ENCODE measurements at regions of chr2 and their contacts with region 1.

Region 1: GRCh38 chr2:26605195-26605998 is 35.8 kb downstream of the CIB4 start:
- DNase-seq: peak; percentile 60
- ATAC-seq: peak; percentile 76
- H3K4me3 Mint-ChIP-seq: no peak overlapping the region
- H3K27ac Mint-ChIP-seq: no peak overlapping the region
- H3K4me1 Mint-ChIP-seq: peaks cover 20% of the 10 kb centered on the region
- H3K27me3 Mint-ChIP-seq: peaks cover 20% of the 10 kb centered on the region

Region 2: GRCh38 chr2:26591619-26592505 is 13.5 kb before region 1 on chr2:
- CTCF ChIA-PET with region 1: interaction called, 34 read pairs
- POLR2A ChIA-PET with region 1: no interaction called
- DNase-seq: no peak
- ATAC-seq: no peak
- H3K4me3 Mint-ChIP-seq: no peak overlapping the region
- H3K27ac Mint-ChIP-seq: no peak overlapping the region
- H3K4me1 Mint-ChIP-seq: peaks cover 6% of the 10 kb centered on the region
- H3K27me3 Mint-ChIP-seq: peaks cover 26% of the 10 kb centered on the region

Region 3: DNA sequence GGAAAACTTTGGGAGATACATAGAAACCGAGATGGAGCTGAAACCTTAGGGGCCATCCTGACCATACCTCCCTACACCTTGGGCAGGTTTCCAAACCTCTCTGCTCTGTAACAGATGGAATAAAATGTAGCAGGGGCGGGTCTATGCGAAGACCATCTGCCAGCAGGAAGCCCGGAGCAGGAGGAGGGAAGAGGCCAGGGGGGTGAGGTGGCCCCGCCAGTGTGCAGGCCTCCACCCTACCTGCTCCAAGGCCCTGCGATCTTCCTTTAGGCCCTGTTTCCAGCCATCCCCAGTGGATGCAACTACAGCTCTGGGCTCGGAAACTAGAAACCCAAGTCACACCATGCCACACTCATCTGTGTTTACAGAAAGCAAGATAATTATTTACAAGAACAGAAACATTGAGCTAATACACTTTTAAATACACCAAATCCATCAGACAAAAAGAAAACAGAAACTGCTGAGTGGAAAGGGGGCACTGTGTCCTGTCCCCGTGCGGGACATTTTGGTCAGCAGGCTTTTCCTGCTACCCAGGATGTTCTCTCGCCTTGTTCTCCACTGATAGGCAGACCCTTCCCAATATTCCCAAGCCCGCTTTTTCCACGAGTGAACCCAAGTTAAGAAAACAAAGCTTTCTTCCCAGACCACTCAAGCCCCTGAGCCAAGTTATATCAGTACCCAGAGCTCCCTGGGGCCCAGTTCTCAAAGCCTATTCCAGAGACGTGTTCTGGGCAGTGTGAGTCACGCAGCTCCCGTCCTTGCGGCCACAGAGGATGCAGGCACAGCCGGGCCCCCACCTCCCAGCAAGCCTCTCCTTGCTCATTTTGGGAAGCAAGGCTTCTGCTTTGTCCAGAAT is 18.4 kb after region 1 on chr2:
- CTCF ChIA-PET with region 1: no interaction called
- POLR2A ChIA-PET with region 1: no interaction called
- DNase-seq: no peak
- ATAC-seq: no peak
- H3K4me3 Mint-ChIP-seq: no peak overlapping the region
- H3K27ac Mint-ChIP-seq: no peak overlapping the region
- H3K4me1 Mint-ChIP-seq: no peaks in the 10 kb centered on the region
- H3K27me3 Mint-ChIP-seq: peaks cover 16% of the 10 kb centered on the region

Region 4: GRCh38 chr2:26745609-26746327 is 140.4 kb after region 1 on chr2:
- CTCF ChIA-PET with region 1: interaction called, 151 read pairs
- POLR2A ChIA-PET with region 1: no interaction called
- DNase-seq: peak; percentile 88
- ATAC-seq: peak; percentile 54
- H3K4me3 Mint-ChIP-seq: no peak overlapping the region
- H3K27ac Mint-ChIP-seq: no peak overlapping the region
- H3K4me1 Mint-ChIP-seq: peaks cover 12% of the 10 kb centered on the region
- H3K27me3 Mint-ChIP-seq: no peaks in the 10 kb centered on the region

Region 5: DNA sequence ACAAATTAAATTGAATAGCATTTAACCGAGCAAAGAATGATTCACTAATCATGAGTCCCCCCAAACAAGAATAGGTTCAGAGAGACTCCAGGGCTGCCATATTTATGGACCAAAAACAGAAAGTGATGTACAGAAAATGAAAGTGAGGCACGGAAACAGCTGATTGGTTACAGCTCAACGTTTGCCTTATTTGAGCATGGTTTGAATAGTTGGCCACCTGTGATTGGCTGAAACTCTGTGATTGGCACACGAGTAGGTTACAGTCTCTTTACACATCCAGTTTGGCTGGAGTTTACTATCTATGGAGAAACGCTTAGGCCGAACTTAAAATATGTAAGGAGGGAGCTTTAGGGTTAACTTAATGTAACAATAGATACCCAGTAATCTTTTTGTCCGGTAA is 215.5 kb after region 1 on chr2:
- CTCF ChIA-PET with region 1: no interaction called
- POLR2A ChIA-PET with region 1: no interaction called
- DNase-seq: no peak
- ATAC-seq: no peak
- H3K4me3 Mint-ChIP-seq: no peak overlapping the region
- H3K27ac Mint-ChIP-seq: no peak overlapping the region
- H3K4me1 Mint-ChIP-seq: no peaks in the 10 kb centered on the region
- H3K27me3 Mint-ChIP-seq: peaks cover 3% of the 10 kb centered on the region

Region 6: DNA sequence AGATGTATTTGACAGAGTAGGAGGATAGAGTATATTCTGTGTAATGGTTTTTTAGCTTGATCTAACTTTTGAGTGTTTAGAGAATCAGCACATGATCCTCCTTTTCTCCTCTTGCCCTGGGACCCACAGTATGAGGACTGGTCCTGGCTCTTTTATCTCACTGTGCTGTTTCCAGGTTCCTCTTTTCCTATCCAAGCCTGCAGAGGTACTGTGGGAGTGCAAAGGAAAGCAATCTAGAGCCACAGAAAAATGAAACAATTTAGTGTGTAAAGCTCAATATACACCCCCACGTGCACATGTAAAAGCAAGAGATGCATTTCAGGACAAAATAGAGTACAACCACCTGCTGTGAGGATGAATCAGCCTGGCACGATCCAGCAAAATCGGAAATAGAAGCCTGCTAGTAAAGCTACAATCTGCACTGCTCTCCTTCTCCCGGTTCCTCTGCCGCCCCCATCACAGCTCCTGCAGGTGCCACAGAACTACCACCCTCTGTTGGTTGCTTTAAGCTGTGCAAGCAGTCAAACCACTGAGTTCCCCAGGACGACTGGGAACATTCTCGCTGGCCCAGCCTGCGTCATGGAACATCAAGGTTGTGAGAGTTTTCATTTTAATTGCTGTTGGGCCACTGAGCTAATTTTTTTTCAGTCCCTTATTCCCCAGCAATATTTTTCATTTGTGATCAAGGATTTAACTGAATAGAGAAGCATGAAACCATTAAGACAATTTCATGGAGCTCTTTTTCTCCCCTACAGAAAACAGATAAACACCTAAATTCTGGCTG is 317.2 kb after region 1 on chr2:
- CTCF ChIA-PET with region 1: no interaction called
- POLR2A ChIA-PET with region 1: no interaction called
- DNase-seq: peak; percentile 51
- ATAC-seq: peak; percentile 90
- H3K4me3 Mint-ChIP-seq: no peak overlapping the region
- H3K27ac Mint-ChIP-seq: no peak overlapping the region
- H3K4me1 Mint-ChIP-seq: peaks cover 5% of the 10 kb centered on the region
- H3K27me3 Mint-ChIP-seq: peaks cover 28% of the 10 kb centered on the region

Measured in activated CD8-positive, alpha-beta T cell treated with anti-CD3 and anti-CD28 coated beads, Interleukin-2, amount 10 ng/mL, durations not matched to agents 7 days and 5 days (primary cell).